AG04450 (cell line): ENCODE measurements at regions of chr2 and their contacts with region 1.

Region 1: DNA sequence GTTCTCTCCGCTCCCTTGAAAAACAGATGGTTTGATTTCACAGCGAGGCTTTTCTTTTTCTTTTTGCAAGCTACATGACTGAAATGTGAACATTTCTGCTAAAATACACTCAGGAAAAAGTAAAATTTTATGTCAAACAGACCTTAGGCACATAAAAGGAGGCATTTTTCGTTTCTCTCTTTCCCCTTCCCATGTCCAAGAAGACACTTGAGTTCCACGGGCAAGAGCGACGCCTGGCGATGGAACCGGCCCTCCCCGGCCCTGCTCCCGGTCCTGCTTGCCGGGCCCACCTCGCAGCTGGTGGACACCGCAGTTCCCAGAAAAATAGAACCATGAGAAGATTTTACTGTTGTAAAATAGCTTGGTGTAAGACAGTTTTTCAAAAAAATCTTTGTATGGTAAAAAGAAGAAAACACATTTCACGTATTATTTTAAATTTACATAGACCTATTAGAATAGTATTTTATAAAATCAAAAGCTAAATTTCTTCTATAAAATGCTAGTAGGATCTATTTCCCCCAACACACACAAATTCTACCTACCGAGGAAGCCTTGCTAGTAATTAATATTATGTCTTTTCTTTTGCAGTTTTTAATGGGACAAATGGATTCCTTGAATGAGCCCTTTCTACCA is 2.3 kb upstream of the ALKAL2 start:
- DNase-seq: peak; percentile 38
- H3K4me3 ChIP-seq: peak overlapping the region; percentile 57
- H3K27ac ChIP-seq: no peak overlapping the region
- H3K27me3 ChIP-seq: peaks cover 12% of the 10 kb centered on the region
- CTCF ChIP-seq: peak; percentile 95

Region 2: DNA sequence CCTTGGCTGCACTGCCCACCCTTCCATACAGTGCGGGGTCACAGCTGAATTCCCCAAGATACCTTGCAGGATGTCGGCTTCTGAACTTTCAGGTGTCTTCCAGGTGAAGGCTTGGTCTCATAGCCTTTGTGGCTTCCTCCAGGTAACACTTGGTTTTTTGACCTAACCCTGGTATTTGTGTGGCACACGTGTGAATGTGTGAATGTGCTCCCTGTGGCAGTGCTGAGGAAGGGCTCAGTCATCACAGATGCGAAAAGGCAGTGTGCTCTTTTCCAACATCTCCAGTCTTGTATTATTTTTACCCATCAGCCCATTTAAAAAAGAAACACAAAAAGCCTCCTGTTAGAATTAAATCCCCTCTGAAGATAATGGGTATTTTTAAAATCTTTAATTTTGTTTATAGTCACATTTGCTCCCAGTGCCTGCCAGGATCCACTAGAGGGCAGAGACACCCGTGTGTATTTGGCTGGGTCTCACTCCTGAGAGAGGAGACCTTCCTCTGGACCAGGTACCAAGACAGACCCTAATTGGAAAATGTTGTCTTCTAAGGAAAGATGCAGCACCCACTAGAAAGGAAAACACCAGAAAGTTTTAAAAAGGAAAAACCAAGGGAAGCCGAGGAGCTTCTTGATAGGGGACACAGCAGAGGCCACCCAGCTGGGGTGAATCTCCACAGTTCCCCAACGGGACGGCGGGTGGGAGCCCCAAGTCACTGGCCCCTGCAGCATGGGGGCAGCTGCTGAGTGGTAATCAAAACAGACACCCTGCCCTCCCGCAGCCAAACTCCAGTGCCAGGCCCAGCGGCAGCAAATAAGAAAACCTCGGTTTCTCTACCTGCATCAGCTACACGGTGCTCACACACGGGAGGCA is 271.6 kb before region 1 on chr2:
- CTCF ChIA-PET with region 1: interaction called, 48 read pairs
- POLR2A ChIA-PET with region 1: no interaction called
- DNase-seq: no peak
- H3K4me3 ChIP-seq: no peak overlapping the region
- H3K27ac ChIP-seq: no peak overlapping the region
- H3K27me3 ChIP-seq: no peaks in the 10 kb centered on the region
- CTCF ChIP-seq: peak; percentile 48

Region 3: GRCh38 chr2:237878-238277 is 52.3 kb before region 1 on chr2:
- CTCF ChIA-PET with region 1: interaction called, 14 read pairs
- POLR2A ChIA-PET with region 1: no interaction called
- DNase-seq: no peak
- H3K4me3 ChIP-seq: no peak overlapping the region
- H3K27ac ChIP-seq: no peak overlapping the region
- H3K27me3 ChIP-seq: no peaks in the 10 kb centered on the region
- CTCF ChIP-seq: no peak

Region 4: DNA sequence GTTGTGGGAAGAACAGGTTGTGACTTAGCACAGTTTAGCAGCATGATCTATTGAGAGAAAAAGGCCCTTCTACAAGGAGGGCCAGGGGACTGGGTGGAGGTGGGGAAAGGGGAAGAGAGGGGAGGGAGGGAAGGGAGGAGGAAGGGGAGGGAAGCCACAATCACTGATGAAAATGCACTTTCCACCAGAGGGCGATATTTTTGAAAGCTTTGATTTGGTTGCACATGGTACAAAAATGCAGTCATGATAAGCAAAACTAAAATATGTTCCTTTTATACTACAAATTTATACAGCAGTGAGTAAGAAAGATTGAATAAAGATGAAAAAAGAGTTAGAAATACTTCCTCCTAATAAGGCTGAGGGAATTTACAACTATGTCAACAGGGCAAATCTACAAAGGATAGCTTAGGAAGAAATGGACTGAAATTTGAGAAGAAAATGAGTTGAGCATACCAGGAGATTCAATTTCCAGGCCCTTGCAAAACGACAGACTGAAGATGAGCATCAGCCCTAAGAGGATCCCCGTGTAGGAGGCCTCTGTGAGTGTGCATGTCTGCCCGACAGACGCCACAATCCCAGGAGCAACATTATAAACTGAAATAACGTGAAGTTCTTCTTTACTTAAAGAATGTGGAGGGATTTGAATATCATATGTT is 43.6 kb before region 1 on chr2:
- CTCF ChIA-PET with region 1: interaction called, 61 read pairs
- POLR2A ChIA-PET with region 1: no interaction called
- DNase-seq: peak; percentile 47
- H3K4me3 ChIP-seq: no peak overlapping the region
- H3K27ac ChIP-seq: peak overlapping the region; percentile 49
- H3K27me3 ChIP-seq: no peaks in the 10 kb centered on the region
- CTCF ChIP-seq: peak; percentile 64

Region 5: GRCh38 chr2:254241-254640 is 36.0 kb before region 1 on chr2:
- CTCF ChIA-PET with region 1: interaction called, 16 read pairs
- POLR2A ChIA-PET with region 1: no interaction called
- DNase-seq: no peak
- H3K4me3 ChIP-seq: no peak overlapping the region
- H3K27ac ChIP-seq: no peak overlapping the region
- H3K27me3 ChIP-seq: no peaks in the 10 kb centered on the region
- CTCF ChIP-seq: no peak

Region 6: DNA sequence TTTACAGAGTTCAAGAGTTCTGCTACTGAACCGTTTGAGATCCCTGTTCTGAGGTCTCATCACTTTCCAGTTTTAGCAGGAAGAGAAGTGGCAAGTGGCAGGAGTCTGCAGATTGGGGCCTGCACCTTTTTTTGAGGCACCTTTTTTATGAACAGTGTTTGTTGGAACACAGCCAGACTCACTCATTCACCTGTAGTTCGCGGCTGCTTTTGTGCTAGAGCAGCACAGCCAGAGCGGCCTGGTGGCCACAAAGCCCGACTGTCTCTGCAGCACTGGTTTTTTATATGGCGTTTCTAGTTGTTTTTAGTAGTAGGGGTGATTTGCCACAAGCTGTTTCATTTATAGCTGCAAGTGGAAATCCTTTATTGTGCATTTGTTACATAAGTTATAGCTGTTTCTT is 16.9 kb before region 1 on chr2:
- CTCF ChIA-PET with region 1: interaction called, 14 read pairs
- POLR2A ChIA-PET with region 1: no interaction called
- DNase-seq: no peak
- H3K4me3 ChIP-seq: no peak overlapping the region
- H3K27ac ChIP-seq: no peak overlapping the region
- H3K27me3 ChIP-seq: no peaks in the 10 kb centered on the region
- CTCF ChIP-seq: no peak

Region 7: GRCh38 chr2:278927-279320 is 11.3 kb before region 1 on chr2:
- CTCF ChIA-PET with region 1: interaction called, 14 read pairs
- POLR2A ChIA-PET with region 1: no interaction called
- DNase-seq: no peak
- H3K4me3 ChIP-seq: no peak overlapping the region
- H3K27ac ChIP-seq: no peak overlapping the region
- H3K27me3 ChIP-seq: no peaks in the 10 kb centered on the region
- CTCF ChIP-seq: no peak